Heart left ventricle (tissue), 16 donors: ENCODE measurements at regions of chr1 and their contacts with region 1.

Region 1: GRCh38 chr1:27725374-27726173 is at the start of gene FAM76A:
- DNase-seq: peak; percentile 99 to 100 (median 100)
- ATAC-seq: peak; percentile 98 to 99 (median 99)
- H3K4me3 ChIP-seq: peak within 1 kb of the TSS; percentile 71 to 100 (median 92)
- H3K27ac ChIP-seq: peak within 1 kb of the TSS; percentile 73 to 98 (median 93)
- H3K4me1 ChIP-seq: peaks cover 0 to 23% (median 17%) of the 10 kb centered on the region in 12 donors
- H3K27me3 ChIP-seq: no peaks in the 10 kb centered on the region
- CTCF ChIP-seq: peak; percentile 29 to 85 (median 52)
- POLR2A ChIP-seq: peak; percentile 41 to 91
- total RNA-seq, gene FAM76A: 9.7 to 24.0 (median 13.5) TPM

Region 2: GRCh38 chr1:27671964-27672749 is 53.4 kb before region 1 on chr1 and contains the start of gene IFI6:
- intact Hi-C with region 1: loop called in 9 of 10 experiments (anchors 1 to 5 kb)
- DNase-seq: peak; percentile 85 to 91 (median 89)
- ATAC-seq: peak; percentile 95 to 99 (median 98)
- H3K4me3 ChIP-seq: peak within 1 kb of the TSS; percentile 38 to 94 (median 61)
- H3K27ac ChIP-seq: peak within 1 kb of the TSS; percentile 43 to 92 (median 86)
- H3K4me1 ChIP-seq: peaks cover 0 to 55% (median 23%) of the 10 kb centered on the region in 12 donors
- H3K27me3 ChIP-seq: no peaks in the 10 kb centered on the region
- CTCF ChIP-seq: peak in 11 of 12 donors; percentile 5 to 62 (median 42)
- POLR2A ChIP-seq: peak in 1 of 2 donors; percentile 61
- total RNA-seq, gene IFI6: 18.3 to 140 (median 70.2) TPM

Region 3: GRCh38 chr1:27830621-27831424 is 105.2 kb after region 1 on chr1 and contains the start of gene PPP1R8:
- intact Hi-C with region 1: loop called in 1 of 10 experiments (anchors 2 kb)
- DNase-seq: peak; percentile 92 to 96 (median 95)
- ATAC-seq: peak; percentile 99 to 100 (median 100)
- H3K4me3 ChIP-seq: peak within 1 kb of the TSS; percentile 66 to 99 (median 92)
- H3K27ac ChIP-seq: peak within 1 kb of the TSS; percentile 73 to 94 (median 90)
- H3K4me1 ChIP-seq: peaks cover 8 to 34% (median 19%) of the 10 kb centered on the region in 12 donors
- H3K27me3 ChIP-seq: no peaks in the 10 kb centered on the region
- CTCF ChIP-seq: peak in 1 of 12 donors; percentile 17
- POLR2A ChIP-seq: peak in 1 of 2 donors; percentile 73
- total RNA-seq, gene PPP1R8: 21.4 to 31.8 (median 25.1) TPM

Region 4: GRCh38 chr1:27894521-27894920 is 168.9 kb after region 1 on chr1:
- intact Hi-C with region 1: no loop called
- DNase-seq: no peak
- ATAC-seq: no peak
- H3K4me3 ChIP-seq: no peak overlapping the region
- H3K27ac ChIP-seq: no peak overlapping the region
- H3K4me1 ChIP-seq: peaks cover 0 to 36% (median 0%) of the 10 kb centered on the region in 12 donors
- H3K27me3 ChIP-seq: no peaks in the 10 kb centered on the region
- CTCF ChIP-seq: no peak
- POLR2A ChIP-seq: no peak